Endothelial cell of umbilical vein (primary cell): ENCODE measurements at regions of chr6 and their contacts with region 1.

Region 1: DNA sequence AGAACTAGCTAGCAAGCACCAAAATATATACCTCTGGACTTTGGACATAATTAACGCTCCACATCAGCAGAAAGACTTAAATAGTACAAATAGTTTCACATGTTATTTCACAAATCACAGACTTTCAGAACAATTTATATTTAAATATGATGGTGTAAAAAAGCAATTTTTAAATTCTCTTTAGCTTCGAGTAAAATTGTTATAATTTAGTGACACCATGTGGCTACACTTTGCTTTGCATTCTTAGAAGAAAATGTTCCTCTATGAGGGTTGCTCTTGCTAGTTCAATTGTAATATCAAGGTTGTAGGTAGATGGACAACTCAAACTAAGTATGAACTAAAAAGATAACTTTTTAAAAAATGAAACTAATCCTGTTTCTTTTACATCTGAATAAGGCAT is 69.0 kb downstream of the BTBD9 start:
- DNase-seq: peak; percentile 58
- H3K4me3 ChIP-seq: no peak overlapping the region
- H3K27ac ChIP-seq: no peak overlapping the region
- H3K4me1 ChIP-seq: peaks cover 36% of the 10 kb centered on the region
- H3K27me3 ChIP-seq: no peaks in the 10 kb centered on the region
- CTCF ChIP-seq: peak; percentile 10 to 14
- POLR2A ChIP-seq: no peak

Region 2: GRCh38 chr6:37741757-37742400 is 828.9 kb before region 1 on chr6:
- CTCF ChIA-PET with region 1: interaction called, 13 read pairs
- POLR2A ChIA-PET with region 1: no interaction called
- dilution Hi-C with region 1: no loop called
- intact Hi-C with region 1: no loop called
- DNase-seq: peak; percentile 20
- H3K4me3 ChIP-seq: no peak overlapping the region
- H3K27ac ChIP-seq: no peak overlapping the region
- H3K4me1 ChIP-seq: no peaks in the 10 kb centered on the region
- H3K27me3 ChIP-seq: peaks cover 30 to 32% of the 10 kb centered on the region in 2 experiments
- CTCF ChIP-seq: peak; percentile 35 to 63
- POLR2A ChIP-seq: no peak

Region 3: DNA sequence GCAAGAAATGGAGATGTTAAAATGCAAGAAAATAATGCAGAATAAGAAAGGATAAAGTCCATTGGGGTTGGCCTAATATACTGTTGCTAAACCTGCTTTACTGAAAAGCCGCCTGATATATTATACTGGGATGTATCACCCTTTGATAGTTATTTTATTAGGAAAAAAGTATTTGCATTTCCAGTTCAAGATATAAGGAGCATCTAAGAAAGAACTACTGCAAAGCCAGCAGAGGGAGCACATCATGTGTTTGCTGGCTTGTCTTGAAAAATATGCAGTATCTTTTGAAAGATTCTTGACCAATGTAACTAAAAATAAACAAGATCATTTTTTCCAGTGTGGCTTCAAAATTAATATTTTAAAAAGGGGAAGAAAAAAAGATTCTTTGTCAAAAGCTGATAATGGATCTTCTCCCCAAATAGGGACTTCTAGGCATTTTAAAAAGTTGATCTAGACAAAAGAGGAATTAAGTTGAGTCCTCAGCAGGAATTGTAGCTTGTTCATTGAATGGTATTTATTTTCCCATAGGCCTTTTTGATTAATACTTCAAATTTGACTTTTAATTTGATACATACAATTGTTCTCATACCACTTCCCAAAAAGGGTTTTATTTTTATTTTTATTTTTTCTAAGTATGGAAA is 536.4 kb before region 1 on chr6:
- CTCF ChIA-PET with region 1: interaction called, 26 read pairs
- POLR2A ChIA-PET with region 1: no interaction called
- dilution Hi-C with region 1: no loop called
- intact Hi-C with region 1: loop called (anchors 5 kb)
- DNase-seq: peak; percentile 49
- H3K4me3 ChIP-seq: no peak overlapping the region
- H3K27ac ChIP-seq: no peak overlapping the region
- H3K4me1 ChIP-seq: no peaks in the 10 kb centered on the region
- H3K27me3 ChIP-seq: no peaks in the 10 kb centered on the region
- CTCF ChIP-seq: peak; percentile 15 to 52
- POLR2A ChIP-seq: no peak

Region 4: GRCh38 chr6:38552121-38552520 is 18.6 kb before region 1 on chr6:
- CTCF ChIA-PET with region 1: interaction called, 14 read pairs
- POLR2A ChIA-PET with region 1: no interaction called
- dilution Hi-C with region 1: no loop called
- intact Hi-C with region 1: no loop called
- DNase-seq: no peak
- H3K4me3 ChIP-seq: no peak overlapping the region
- H3K27ac ChIP-seq: no peak overlapping the region
- H3K4me1 ChIP-seq: no peaks in the 10 kb centered on the region
- H3K27me3 ChIP-seq: no peaks in the 10 kb centered on the region
- CTCF ChIP-seq: no peak
- POLR2A ChIP-seq: no peak

Region 5: DNA sequence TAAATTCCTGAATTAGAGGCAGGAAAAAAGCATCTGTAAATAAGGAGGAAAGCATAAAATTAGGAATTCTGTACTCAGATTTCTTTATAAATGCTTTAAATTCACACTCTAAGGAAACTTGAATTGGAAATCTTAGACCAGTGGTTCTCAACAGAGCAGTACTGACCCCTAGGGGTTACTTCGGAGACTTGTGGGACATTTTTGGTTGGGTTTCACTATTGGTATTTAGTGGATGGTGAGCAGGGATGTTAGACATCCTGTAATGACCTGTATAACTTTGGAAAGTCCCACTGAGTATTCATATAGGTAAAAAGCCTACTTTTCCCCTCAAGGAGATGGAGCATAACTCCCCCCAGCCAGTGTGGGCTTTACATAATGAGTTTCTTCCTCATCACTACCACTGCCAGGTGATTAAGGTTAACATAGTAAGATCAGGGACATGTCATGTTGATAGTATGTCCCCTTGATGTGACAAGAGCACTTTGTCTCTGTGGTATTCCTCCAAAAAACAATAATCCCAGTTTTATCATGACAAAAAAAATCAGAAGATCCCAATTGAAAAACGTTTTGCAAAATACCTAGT is 101.2 kb after region 1 on chr6:
- CTCF ChIA-PET with region 1: interaction called, 3 read pairs
- POLR2A ChIA-PET with region 1: no interaction called
- dilution Hi-C with region 1: no loop called
- intact Hi-C with region 1: loop called (anchors 2 kb)
- DNase-seq: peak; percentile 60
- H3K4me3 ChIP-seq: no peak overlapping the region
- H3K27ac ChIP-seq: no peak overlapping the region
- H3K4me1 ChIP-seq: peaks cover 15% of the 10 kb centered on the region
- H3K27me3 ChIP-seq: no peaks in the 10 kb centered on the region
- CTCF ChIP-seq: peak; percentile 55 to 60
- POLR2A ChIP-seq: no peak

Region 6: DNA sequence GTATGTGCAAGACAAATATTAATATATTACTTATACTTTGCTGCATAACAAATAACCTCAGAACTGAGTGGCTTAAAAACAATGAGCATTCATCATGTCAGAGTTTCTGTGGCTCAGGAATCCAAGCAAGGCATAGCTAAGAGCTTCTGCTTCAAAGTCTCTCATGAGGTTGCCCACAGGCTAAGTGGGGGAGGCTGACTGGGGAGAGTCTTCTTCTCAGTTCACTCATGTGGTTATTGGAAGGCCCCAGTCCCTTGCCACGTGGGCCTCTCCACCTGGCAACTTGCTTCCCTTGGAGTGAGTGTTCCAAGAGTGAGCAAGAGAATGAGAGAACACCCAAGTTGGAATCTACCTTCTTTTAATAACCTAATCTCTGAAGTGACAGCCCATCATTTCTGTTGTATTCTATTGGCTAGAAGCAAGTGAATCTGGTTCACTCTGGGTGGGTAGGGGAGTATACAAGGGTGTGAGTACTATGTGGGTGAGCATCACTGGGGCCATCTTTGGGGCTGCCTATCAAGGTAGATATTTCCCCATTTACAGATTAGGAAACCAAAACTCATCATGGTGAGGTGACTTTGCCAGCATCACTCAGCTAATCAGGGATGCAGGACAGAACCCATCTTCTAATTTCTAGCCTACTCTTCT is 180.3 kb after region 1 on chr6:
- CTCF ChIA-PET with region 1: no interaction called
- POLR2A ChIA-PET with region 1: no interaction called
- dilution Hi-C with region 1: no loop called
- intact Hi-C with region 1: no loop called
- DNase-seq: no peak
- H3K4me3 ChIP-seq: no peak overlapping the region
- H3K27ac ChIP-seq: no peak overlapping the region
- H3K4me1 ChIP-seq: peaks cover 4% of the 10 kb centered on the region
- H3K27me3 ChIP-seq: no peaks in the 10 kb centered on the region
- CTCF ChIP-seq: no peak
- POLR2A ChIP-seq: no peak